ENCODE measurements at regions of chr1 and their contacts with region 1.

Region 1: DNA sequence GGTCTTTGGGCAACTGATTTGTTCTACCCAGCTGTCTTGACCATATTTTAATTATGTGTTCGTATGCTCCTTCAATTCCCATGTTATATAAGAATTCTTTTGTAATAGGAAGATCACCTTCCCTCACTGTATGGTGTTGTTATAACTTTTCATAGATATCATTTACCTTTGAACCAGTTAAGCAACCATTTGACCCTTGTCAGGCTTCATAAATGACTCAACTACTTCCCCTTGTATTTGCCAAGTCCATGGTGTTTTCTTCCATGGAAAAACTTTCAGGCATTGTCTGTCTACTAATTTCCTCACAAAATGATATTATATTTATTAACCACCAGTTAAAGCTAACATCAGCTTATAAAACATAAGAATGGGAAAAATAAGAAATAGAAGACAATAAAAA is 5.1 kb downstream of the BPNT1 start:
- DNase-seq: no peak
- ATAC-seq: no peak
- H3K4me3 Mint-ChIP-seq: no peak overlapping the region
- H3K27ac Mint-ChIP-seq: peak overlapping the region; percentile 25
- H3K4me1 Mint-ChIP-seq: peaks cover 27% of the 10 kb centered on the region
- H3K27me3 Mint-ChIP-seq: no peaks in the 10 kb centered on the region
- CTCF ChIP-seq: no peak

Region 2: GRCh38 chr1:220067269-220068204 is 16.9 kb before region 1 on chr1:
- CTCF ChIA-PET with region 1: no interaction called
- POLR2A ChIA-PET with region 1: no interaction called
- intact Hi-C with region 1: loop called (anchors 1 kb)
- DNase-seq: no peak
- ATAC-seq: no peak
- H3K4me3 Mint-ChIP-seq: no peak overlapping the region
- H3K27ac Mint-ChIP-seq: no peak overlapping the region
- H3K4me1 Mint-ChIP-seq: no peaks in the 10 kb centered on the region
- H3K27me3 Mint-ChIP-seq: no peaks in the 10 kb centered on the region
- CTCF ChIP-seq: no peak